ENCODE measurements at regions of chr5 and their contacts with region 1.

Region 1: DNA sequence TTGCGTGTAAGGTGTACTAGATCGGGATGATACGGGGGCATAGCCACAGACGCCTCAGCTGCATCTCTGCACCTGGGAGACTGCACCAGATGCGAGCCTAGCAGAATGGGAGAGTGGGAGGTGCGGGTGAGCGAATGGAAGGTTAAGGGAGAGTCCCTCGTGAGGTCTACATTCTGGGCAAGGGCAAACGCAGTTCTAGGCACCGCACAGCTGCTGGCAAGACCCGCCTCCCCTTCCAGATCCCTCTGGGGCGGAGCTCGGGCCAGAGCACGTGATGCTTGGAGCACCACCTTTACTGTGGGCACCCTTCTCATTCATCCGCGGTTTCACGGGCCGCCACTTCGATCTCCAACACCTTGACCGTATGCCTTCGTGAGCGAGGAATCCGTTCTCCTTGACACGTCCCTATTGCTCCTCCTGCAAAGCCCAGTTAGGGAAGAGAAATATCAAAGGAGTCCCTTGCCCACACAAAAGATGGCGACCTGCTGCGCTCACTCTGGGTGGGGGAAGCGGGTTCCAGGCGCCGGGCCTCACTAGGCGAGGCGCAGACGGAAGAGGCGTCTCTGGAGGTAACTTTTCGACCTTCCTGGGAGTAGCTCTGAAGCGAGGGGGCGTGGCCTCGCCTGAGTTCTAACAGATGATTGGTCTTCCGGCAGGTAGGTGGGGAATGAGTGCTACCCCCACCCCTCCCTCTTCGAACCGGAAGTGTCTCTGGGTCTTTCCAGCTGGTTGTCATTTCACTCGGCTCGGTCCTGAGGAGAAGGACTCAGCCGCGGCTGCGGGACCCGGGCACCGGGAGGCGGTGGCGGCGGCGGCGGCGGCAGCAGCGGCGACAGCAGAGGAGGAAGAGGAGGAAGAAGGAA is at the start of gene CPEB4:
- DNase-seq: peak; percentile 98
- ATAC-seq: peak; percentile 97
- H3K4me3 Mint-ChIP-seq: peak within 1 kb of the TSS; percentile 96
- H3K27ac Mint-ChIP-seq: peak within 1 kb of the TSS; percentile 97
- H3K4me1 Mint-ChIP-seq: peaks cover 76% of the 10 kb centered on the region
- H3K27me3 Mint-ChIP-seq: no peaks in the 10 kb centered on the region
- total RNA-seq, gene CPEB4: 10.5 to 12.3 TPM

Region 2: GRCh38 chr5:173917788-173918786 is 30.2 kb after region 1 on chr5:
- CTCF ChIA-PET with region 1: interaction called, 5 read pairs
- POLR2A ChIA-PET with region 1: interaction called, 17 read pairs
- DNase-seq: peak; percentile 69
- ATAC-seq: peak; percentile 97
- H3K4me3 Mint-ChIP-seq: no peak overlapping the region
- H3K27ac Mint-ChIP-seq: no peak overlapping the region
- H3K4me1 Mint-ChIP-seq: peaks cover 6% of the 10 kb centered on the region
- H3K27me3 Mint-ChIP-seq: no peaks in the 10 kb centered on the region

Measured in activated CD8-positive, alpha-beta T cell treated with anti-CD3 and anti-CD28 coated beads, Interleukin-2, amount 10 ng/mL, durations not matched to agents 7 days and 5 days (primary cell).